ENCODE measurements at regions of chr19 and their contacts with region 1.

Region 1: DNA sequence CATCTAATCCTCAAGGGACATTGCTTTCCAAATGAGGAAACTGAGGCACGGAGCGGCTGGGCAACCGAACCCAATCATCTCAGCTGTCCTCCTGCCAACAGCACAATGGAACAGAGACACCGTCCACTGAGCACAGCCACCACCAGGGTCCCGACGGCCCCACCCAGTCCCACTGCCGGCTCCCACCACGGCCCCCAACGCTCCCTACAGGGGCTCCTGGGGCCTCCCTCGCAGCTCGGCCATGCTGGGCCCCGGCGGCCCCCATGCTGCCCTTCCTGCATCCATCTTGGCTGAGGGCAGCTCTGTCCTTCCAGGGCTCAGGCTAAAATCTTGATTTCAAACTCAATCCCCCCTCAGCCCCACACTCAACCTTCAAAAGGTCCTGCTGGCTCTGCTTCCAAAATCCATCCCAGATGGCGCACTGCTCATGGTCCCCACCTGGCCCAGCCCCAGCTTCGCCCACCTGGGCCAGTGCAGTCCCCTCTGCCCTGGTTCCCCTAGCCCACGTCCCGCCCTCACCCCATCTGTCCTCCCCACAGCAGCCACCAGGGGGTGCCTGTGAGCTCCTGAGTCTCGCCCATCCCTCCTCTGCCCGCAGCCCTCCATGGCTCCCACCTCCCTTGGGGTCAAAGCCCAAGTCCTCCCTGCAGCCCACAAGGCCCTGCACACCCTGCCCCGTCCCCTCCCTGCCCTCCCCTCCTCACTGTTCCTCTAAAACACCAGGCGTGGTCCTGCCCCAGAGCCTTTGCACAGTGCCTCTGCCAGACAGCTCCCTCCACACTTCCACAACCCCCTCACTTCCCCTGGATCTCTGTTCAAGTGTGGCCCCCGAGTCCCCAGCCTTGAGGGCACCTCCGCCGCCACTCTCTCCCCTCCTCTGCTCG is 7.9 kb downstream of the PIP5K1C start:
- DNase-seq: peak; percentile 34 to 56 (median 43)
- H3K4me3 ChIP-seq: no peak overlapping the region
- H3K4me3 Mint-ChIP-seq: peak overlapping the region in 1 of 8 donors; percentile 43
- H3K27ac ChIP-seq: no peak overlapping the region
- H3K27ac Mint-ChIP-seq: peak overlapping the region in 4 of 7 donors; percentile 27 to 70 (median 48)
- H3K4me1 ChIP-seq: peaks cover 23% of the 10 kb centered on the region
- H3K4me1 Mint-ChIP-seq: peaks cover 19 to 47% (median 31%) of the 10 kb centered on the region in 4 donors
- H3K27me3 ChIP-seq: no peaks in the 10 kb centered on the region
- H3K27me3 Mint-ChIP-seq: no peaks in the 10 kb centered on the region

Region 2: DNA sequence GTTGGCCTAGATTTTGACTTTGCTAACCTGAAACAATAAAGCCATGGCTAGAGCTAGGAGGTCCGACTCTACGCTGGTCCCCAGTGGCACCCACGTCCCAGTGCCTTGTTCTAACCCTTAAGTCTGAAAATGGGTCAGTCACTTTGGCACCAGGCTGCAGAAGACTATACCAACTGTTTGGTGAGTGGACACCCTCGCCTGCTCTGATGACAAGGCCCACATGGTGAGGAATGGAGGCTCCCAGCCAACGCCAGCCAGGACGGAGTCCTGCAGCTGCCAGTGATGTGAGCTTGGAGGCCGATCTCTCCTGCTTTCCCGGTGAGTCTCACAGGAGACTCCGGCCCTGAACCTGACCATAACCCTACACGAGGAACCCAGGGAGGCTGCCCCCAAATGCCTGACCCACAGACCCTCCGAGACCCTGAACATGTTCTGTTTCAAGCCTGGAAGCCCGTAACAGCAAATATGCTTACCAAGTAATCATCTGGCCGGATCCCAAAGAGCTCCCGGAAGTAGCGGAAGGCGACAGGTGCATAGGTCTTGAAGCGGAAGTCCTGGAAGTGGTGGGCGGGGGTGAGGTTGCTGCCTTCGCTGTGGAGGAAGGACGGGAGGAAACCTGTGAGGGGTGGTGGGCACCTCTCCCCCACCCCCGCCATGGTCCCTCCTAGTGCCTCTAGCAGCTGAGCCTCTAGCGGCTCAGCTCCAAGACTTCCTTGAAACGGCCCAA is 31.7 kb before region 1 on chr19:
- CTCF ChIA-PET with region 1: interaction called, 11 read pairs
- POLR2A ChIA-PET with region 1: interaction called, 3 read pairs
- intact Hi-C with region 1: no loop called
- DNase-seq: peak in 1 of 5 donors; percentile 32
- H3K4me3 ChIP-seq: no peak overlapping the region
- H3K4me3 Mint-ChIP-seq: peak overlapping the region in 1 of 8 donors; percentile 55
- H3K27ac ChIP-seq: no peak overlapping the region
- H3K27ac Mint-ChIP-seq: peak overlapping the region in 1 of 7 donors; percentile 35
- H3K4me1 ChIP-seq: peaks cover 3% of the 10 kb centered on the region
- H3K4me1 Mint-ChIP-seq: peaks cover 0 to 2% (median 0%) of the 10 kb centered on the region in 4 donors
- H3K27me3 ChIP-seq: no peaks in the 10 kb centered on the region
- H3K27me3 Mint-ChIP-seq: no peaks in the 10 kb centered on the region

Region 3: DNA sequence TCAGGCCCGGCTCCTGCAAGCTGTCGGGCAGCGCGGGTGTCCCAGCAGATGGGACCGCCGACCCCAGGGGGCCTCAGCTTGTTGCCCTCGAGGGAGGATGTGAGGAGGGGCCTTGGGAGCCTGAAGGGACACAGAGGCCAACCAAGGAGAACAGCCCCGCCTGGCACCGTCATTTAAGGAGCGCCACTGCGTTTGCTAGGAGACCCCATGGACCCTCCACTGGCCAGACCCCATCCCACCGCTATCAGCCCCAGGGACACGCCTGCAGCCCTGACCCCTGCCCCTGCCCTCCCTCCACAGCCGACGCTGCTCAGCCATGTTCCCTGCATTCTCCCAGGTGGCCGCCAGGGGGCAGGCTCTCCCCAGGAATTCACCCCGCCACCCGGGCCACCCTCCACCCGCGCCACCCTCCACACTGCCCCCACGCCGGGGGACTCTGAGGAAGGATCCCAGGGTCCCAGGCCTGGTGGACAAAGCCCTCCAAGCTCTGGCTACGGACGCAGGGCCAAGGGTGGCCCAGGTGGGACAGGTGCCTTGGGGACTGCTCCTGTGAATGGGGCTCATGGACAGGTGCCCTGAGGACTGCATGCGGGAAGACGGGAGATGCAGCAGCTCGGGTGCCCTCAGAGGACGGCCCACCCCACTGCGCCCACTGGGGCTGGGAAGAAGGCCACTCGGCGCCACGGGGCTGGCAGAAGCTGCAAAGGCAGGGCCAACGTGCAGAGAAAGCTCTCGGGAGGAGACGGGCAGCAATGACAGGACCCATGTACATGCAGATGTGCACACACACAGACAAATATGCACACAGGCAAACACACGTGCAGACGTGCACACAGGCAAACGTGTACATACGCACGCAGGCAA is 26.5 kb before region 1 on chr19:
- CTCF ChIA-PET with region 1: interaction called, 17 read pairs
- POLR2A ChIA-PET with region 1: interaction called, 5 read pairs
- intact Hi-C with region 1: no loop called
- DNase-seq: peak; percentile 69 to 80 (median 70)
- H3K4me3 ChIP-seq: no peak overlapping the region
- H3K4me3 Mint-ChIP-seq: no peak overlapping the region
- H3K27ac ChIP-seq: no peak overlapping the region
- H3K27ac Mint-ChIP-seq: peak overlapping the region in 3 of 7 donors; percentile 2 to 12 (median 4)
- H3K4me1 ChIP-seq: peaks cover 9% of the 10 kb centered on the region
- H3K4me1 Mint-ChIP-seq: peaks cover 4 to 12% (median 7%) of the 10 kb centered on the region in 4 donors
- H3K27me3 ChIP-seq: no peaks in the 10 kb centered on the region
- H3K27me3 Mint-ChIP-seq: no peaks in the 10 kb centered on the region

Region 4: DNA sequence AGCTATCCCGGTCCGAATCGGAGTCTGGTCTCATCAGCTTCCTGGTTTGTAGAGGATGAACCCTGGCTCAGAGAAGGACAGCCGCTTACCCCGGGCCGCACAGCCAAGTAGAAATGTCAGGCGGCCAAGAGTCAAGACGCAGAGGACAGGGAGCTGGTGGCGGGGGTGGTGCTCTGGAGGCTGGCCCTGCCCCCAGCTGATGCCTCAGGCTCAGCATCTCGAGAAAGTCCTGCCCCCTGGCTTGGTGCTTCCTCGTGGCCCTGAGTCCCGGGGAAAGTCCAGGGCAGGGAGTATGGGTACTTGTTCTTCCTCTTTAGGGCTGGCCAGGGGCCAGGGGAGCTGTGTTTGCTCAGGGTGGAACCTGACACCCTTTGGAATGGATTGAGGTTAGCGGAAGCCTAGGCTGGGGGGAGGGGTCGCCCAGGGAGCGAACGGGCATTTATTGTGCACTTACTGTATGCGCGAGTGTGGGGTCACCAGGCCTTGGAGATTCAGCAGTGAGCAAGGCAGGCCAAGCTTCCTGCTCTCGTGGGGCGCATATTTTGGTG is 18.0 kb after region 1 on chr19:
- CTCF ChIA-PET with region 1: interaction called, 32 read pairs
- POLR2A ChIA-PET with region 1: interaction called, 3 read pairs
- intact Hi-C with region 1: no loop called
- DNase-seq: no peak
- H3K4me3 ChIP-seq: no peak overlapping the region
- H3K4me3 Mint-ChIP-seq: no peak overlapping the region
- H3K27ac ChIP-seq: no peak overlapping the region
- H3K27ac Mint-ChIP-seq: no peak overlapping the region
- H3K4me1 ChIP-seq: no peaks in the 10 kb centered on the region
- H3K4me1 Mint-ChIP-seq: peaks cover 0 to 8% (median 5%) of the 10 kb centered on the region in 4 donors
- H3K27me3 ChIP-seq: no peaks in the 10 kb centered on the region
- H3K27me3 Mint-ChIP-seq: peaks cover 0 to 5% of the 10 kb centered on the region in 2 donors

Region 5: GRCh38 chr19:3771906-3772455 is 79.6 kb after region 1 on chr19 and contains the start of gene RAX2:
- CTCF ChIA-PET with region 1: no interaction called
- POLR2A ChIA-PET with region 1: no interaction called
- intact Hi-C with region 1: no loop called
- DNase-seq: peak in 1 of 5 donors; percentile 20
- H3K4me3 ChIP-seq: no peak within 1 kb of the TSS
- H3K4me3 Mint-ChIP-seq: no peak within 1 kb of the TSS
- H3K27ac ChIP-seq: no peak within 1 kb of the TSS
- H3K27ac Mint-ChIP-seq: peak within 1 kb of the TSS in 2 of 7 donors; percentile 49 to 72
- H3K4me1 ChIP-seq: no peaks in the 10 kb centered on the region
- H3K4me1 Mint-ChIP-seq: peaks cover 0 to 2% (median under 1%) of the 10 kb centered on the region in 4 donors
- H3K27me3 ChIP-seq: no peaks in the 10 kb centered on the region
- H3K27me3 Mint-ChIP-seq: no peaks in the 10 kb centered on the region
- total RNA-seq, gene RAX2: not detected

Measured in CD4-positive, alpha-beta memory T cell (primary cell).